Gastrocnemius medialis (tissue), 4 donors: ENCODE measurements at regions of chr12 and their contacts with region 1.

Region 1: DNA sequence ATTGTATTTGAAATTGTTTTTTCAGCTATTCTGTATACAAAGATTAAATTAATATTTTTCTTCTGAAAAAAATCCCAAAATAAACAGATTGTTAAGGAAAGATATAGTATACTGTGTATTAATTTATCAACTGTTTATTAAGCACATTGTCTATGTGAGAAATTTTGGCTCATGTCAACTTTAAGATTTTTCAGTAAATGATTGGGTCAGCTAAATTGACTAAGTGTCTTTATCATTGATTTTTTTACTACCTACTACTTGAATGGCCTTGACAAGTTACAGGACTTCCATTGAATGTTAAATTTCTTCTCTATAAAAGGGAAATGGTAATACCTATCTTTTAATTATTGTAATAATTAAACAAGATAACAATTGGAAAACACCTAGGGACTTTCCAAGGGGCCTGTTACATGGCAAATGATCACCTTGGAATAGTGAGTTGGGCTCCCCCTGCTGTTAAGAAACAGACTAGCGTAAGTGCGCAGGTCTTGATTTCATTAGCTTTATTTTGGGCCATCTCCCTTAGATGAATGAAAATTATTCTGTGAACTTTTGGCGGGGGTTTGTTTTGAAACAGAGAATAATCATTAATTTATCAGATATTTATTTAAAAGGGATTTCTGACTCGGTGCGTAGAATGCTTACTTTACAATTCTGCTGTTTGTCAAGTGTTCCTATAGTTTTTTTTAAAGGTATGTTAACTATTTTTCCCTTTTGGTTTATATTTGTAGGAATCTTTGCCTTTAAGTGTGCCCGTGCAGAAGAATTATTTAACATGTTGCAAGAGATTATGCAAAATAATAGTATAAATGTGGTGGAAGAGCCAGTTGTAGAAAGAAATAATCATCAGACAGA is 14.5 kb upstream of the CCT2 start:
- DNase-seq: peak in 1 of 2 donors; percentile 29
- ATAC-seq: peak in 1 of 2 donors; percentile 83
- H3K4me3 ChIP-seq: no peak overlapping the region
- H3K27ac ChIP-seq: no peak overlapping the region
- H3K4me1 ChIP-seq: no peaks in the 10 kb centered on the region
- H3K27me3 ChIP-seq: no peaks in the 10 kb centered on the region
- CTCF ChIP-seq: peak; percentile 58 to 82 (median 69)
- POLR2A ChIP-seq: no peak

Region 2: DNA sequence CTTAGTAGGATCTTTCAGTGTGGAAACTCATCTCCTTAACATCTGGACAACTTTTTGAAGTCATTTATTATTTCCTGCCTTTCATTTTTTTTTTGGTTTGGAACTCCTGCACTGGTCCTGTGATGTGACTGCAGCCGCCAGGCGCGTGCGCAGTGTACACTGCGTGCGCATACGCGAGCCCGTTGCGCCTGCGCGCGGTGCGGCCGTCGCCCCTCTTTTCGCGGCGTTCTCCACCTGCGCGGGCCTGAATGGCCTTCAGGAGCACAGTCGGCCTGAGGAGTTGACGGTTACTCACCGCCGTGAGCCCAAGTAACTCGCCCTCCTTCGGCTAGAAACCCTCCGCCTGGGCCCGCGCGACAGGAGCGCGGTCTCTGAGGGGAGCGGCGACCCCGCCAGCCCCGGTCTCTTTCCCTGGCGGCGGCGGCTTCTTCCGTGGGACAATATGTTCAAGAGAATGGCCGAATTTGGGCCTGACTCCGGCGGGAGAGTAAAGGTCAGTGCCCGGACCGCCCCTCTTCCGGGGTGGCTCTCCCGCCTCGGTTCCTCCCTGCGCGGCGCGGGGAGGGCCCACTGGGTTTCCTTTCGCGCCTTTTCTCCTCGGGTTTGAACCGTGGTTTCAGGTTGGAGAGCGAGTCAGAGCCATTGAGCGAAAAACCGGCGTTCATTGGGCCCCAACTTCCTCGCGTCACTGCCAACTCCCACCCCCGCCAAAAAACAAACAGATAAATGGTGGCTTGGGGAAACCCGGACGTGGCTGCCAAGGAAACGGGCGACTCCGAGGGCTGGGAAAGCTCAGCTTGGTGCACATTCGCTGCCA is 211.0 kb before region 1 on chr12 and contains the start of gene YEATS4:
- in situ Hi-C with region 1: loop called (anchors 5 to 10 kb)
- intact Hi-C with region 1: loop called (anchors 2 kb)
- DNase-seq: peak; percentile 51 to 76
- ATAC-seq: peak; percentile 90 to 92
- H3K4me3 ChIP-seq: peak within 1 kb of the TSS; percentile 84 to 89 (median 86)
- H3K27ac ChIP-seq: peak within 1 kb of the TSS; percentile 86 to 93 (median 91)
- H3K4me1 ChIP-seq: peaks cover 4 to 13% of the 10 kb centered on the region in 2 donors
- H3K27me3 ChIP-seq: no peaks in the 10 kb centered on the region
- CTCF ChIP-seq: no peak
- POLR2A ChIP-seq: peak; percentile 31 to 51
- total RNA-seq, gene YEATS4: 12.5 to 34.6 (median 25.8) TPM

Region 3: DNA sequence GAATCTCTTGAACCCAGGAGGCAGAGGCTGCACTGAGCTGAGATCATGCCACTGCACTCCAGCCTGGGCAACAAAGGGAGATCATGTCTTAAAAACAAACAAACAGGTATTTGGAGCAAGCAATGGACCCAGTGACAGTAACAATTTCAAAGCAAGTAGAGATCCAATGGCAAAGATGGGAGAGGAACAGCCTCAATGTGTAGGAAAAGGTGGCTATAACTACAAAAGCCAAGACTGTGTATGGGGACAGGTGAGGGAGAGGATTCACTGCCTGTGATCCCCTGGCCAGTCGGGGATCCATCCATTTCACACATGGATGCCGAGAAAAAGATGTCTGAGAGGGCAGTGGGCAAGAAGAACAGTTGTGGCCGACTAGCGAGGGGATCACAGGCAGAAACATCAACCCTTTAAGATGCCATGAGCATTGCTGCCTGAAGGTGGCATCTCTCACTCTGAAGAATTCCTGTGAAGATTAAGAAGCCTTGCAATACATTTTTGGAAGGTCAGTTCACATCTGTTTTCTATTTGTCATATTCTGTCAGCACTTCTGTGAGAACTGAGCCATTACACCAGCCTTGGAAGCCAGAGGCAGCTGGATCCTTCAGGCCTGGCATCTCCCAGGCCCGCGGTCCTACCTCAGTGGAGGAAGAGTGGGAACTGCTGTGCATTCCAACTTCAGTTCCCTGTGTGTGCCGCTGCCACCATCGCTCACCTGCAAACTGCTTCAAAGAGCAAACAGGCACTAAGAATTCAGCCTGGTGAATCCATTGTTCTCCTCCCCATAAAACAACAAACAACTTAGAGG is 155.1 kb before region 1 on chr12:
- in situ Hi-C with region 1: loop called in 1 of 4 experiments (anchors 5 kb)
- intact Hi-C with region 1: loop called (anchors 1 kb)
- DNase-seq: peak; percentile 12 to 41
- ATAC-seq: peak; percentile 93 to 94
- H3K4me3 ChIP-seq: no peak overlapping the region
- H3K27ac ChIP-seq: no peak overlapping the region
- H3K4me1 ChIP-seq: peaks cover 6 to 7% of the 10 kb centered on the region in 2 donors
- H3K27me3 ChIP-seq: no peaks in the 10 kb centered on the region
- CTCF ChIP-seq: peak; percentile 48 to 69 (median 67)
- POLR2A ChIP-seq: no peak

Region 4: GRCh38 chr12:69470189-69471075 is 100.3 kb before region 1 on chr12 and contains the start of gene FRS2:
- in situ Hi-C with region 1: loop called in 1 of 4 experiments (anchors 10 kb)
- intact Hi-C with region 1: loop called (anchors 1 kb)
- DNase-seq: peak; percentile 80 to 88
- ATAC-seq: peak; percentile 99
- H3K4me3 ChIP-seq: peak within 1 kb of the TSS; percentile 92 to 96 (median 94)
- H3K27ac ChIP-seq: peak within 1 kb of the TSS; percentile 83 to 96 (median 92)
- H3K4me1 ChIP-seq: peaks cover 43 to 45% of the 10 kb centered on the region in 2 donors
- H3K27me3 ChIP-seq: no peaks in the 10 kb centered on the region
- CTCF ChIP-seq: peak in 3 of 5 experiments; percentile 21 to 45 (median 23)
- POLR2A ChIP-seq: peak; percentile 73 to 80
- total RNA-seq, gene FRS2: 21.0 to 32.1 (median 21.3) TPM

Region 5: GRCh38 chr12:69676257-69677012 is 105.7 kb after region 1 on chr12:
- in situ Hi-C with region 1: no loop called
- intact Hi-C with region 1: no loop called
- DNase-seq: no peak
- ATAC-seq: no peak
- H3K4me3 ChIP-seq: no peak overlapping the region
- H3K27ac ChIP-seq: no peak overlapping the region
- H3K4me1 ChIP-seq: no peaks in the 10 kb centered on the region
- H3K27me3 ChIP-seq: no peaks in the 10 kb centered on the region
- CTCF ChIP-seq: no peak
- POLR2A ChIP-seq: no peak

Region 6: GRCh38 chr12:69732088-69732487 is 161.3 kb after region 1 on chr12:
- in situ Hi-C with region 1: no loop called
- intact Hi-C with region 1: no loop called
- DNase-seq: no peak
- ATAC-seq: no peak
- H3K4me3 ChIP-seq: no peak overlapping the region
- H3K27ac ChIP-seq: no peak overlapping the region
- H3K4me1 ChIP-seq: no peaks in the 10 kb centered on the region
- H3K27me3 ChIP-seq: no peaks in the 10 kb centered on the region
- CTCF ChIP-seq: no peak
- POLR2A ChIP-seq: no peak